Esophagus muscularis mucosa (tissue), 4 donors: ENCODE measurements at regions of chr3 and their contacts with region 1.

Region 1: DNA sequence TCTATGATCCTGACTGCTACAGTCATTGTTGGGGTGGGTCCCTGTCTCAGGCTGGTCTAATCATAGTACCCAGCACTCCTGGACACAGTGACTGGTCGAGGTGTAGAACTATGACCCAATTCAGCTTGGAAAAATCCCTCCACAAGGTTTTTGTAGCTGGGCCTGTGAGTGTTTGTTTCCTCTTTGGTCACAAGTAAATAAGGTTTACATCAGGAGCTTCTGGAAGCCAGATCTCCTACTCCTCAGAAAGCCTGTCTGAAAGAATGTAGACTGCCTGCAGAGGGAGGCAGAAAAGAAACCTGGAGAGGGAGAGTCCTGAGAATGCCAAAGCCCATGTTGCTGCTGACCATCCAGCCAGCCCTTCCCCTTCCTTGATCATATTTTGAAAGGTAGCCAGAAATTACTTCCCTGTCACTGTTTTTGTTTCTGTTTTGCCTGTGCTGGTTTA is 123.2 kb downstream of the RAP2B start:
- DNase-seq: no peak
- H3K4me3 ChIP-seq: no peak overlapping the region
- H3K27ac ChIP-seq: peak overlapping the region; percentile 11 to 57 (median 54)
- H3K4me1 ChIP-seq: peaks cover 9 to 23% (median 17%) of the 10 kb centered on the region in 4 donors
- H3K27me3 ChIP-seq: no peaks in the 10 kb centered on the region
- CTCF ChIP-seq: no peak
- EP300 ChIP-seq: no peak
- POLR2A ChIP-seq: no peak

Region 2: DNA sequence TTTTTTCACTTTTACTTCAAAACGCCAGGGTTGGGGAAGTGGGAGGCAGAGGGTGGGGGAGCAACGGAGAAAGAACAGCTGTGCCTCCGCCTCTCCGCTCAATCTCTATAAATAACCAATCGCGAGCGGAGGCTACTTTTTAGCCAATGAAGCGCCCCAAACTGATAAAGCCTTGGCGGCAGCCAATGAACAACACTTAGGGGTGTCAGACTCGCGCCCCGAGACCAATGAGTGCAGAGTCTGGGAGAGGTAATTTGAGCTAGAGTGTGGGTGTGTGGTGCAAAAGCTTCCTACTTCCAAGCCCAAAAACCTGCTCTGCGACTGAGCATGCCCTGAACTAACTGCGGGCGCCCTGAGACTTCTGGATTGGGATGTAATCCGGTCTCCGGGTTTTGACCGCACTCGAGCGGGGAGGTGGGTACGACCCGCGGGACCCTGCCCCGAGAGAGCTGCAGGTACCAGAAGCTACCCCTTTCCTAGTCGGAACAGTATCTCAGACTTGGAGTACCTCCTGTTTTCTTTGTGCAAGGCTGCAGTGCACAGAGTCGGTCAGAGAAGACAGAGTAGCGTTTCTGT is 124.0 kb before region 1 on chr3:
- intact Hi-C with region 1: loop called (anchors 5 kb)
- DNase-seq: peak; percentile 98
- H3K4me3 ChIP-seq: peak overlapping the region; percentile 70 to 96 (median 89)
- H3K27ac ChIP-seq: peak overlapping the region; percentile 87 to 98 (median 92)
- H3K4me1 ChIP-seq: peaks cover 19 to 37% (median 32%) of the 10 kb centered on the region in 4 donors
- H3K27me3 ChIP-seq: no peaks in the 10 kb centered on the region
- CTCF ChIP-seq: no peak
- EP300 ChIP-seq: no peak
- POLR2A ChIP-seq: peak; percentile 45